IMR-90 (cell line): ENCODE measurements at regions of chr1 and their contacts with region 1.

Region 1: DNA sequence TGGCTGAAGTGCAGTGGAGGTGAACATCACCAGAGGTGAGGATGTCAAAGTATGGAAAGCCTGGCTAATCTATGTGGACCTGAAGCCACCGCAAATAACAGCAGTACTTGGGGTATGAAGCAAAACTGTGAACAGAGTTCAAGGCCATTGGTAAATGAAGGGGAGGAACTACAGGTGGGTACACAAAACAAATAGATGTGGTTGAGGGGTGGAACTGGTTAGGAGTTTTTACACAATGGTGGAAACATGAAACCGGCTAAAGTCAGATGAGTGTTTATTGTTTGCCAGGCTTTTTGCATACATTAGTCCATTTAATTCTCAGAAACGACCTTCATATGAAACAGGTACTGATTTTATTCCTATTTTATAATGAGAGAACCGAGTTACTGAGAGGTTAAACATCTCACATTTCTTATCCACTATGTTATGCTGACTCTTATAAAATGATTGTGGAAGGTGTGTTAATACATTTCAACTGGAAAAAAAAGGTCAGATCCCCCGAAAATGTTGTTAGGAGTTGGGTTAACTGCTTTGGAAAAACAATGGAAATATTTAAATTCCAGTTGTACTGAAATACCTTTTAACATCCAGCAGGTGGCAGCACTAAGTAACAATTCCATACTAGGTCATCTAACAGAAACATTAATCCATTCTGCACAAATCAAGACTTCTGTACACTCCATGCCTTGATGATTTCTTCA is 44.3 kb upstream of the GTF2B start:
- DNase-seq: peak; percentile 52
- ATAC-seq: peak; percentile 81
- H3K4me3 ChIP-seq: no peak overlapping the region
- H3K27ac ChIP-seq: no peak overlapping the region
- H3K4me1 ChIP-seq: no peaks in the 10 kb centered on the region
- H3K27me3 ChIP-seq: no peaks in the 10 kb centered on the region
- CTCF ChIP-seq: peak; percentile 60
- POLR2A ChIP-seq: no peak
- RAD21 ChIP-seq: peak; percentile 49

Region 2: DNA sequence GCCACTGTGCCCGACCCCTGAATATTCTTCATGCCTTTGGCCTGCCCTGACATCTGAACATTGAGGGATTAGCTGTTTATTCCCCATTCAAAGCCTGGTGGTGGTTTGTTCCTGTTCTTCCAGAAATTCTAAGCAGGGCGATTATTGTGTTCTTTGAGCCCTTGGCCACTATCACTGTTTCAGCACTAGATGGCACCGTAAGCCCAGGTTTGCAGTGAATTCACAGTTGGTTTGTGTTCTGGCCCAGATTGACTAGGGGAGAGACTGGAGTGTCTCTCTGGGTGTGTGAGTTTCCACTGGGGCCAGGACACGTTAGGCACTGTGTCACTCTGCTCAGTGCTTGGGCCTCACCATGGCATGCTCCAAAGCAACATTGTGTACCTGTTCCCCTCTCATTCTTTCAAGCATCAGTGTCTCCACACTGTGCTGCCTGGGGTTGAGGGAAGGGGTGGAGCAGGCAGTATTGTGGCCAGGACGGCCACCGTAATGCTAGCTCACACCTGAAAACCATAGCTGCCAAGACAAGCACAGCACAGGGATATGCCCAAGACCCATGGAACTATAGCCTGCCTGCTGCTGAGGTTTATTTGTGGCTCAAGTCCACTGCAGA is 198.9 kb before region 1 on chr1:
- CTCF ChIA-PET with region 1: no interaction called
- POLR2A ChIA-PET with region 1: no interaction called
- dilution Hi-C with region 1: no loop called
- in situ Hi-C with region 1: no loop called
- intact Hi-C with region 1: loop called (anchors 1 kb)
- DNase-seq: peak; percentile 55
- ATAC-seq: peak; percentile 65
- H3K4me3 ChIP-seq: no peak overlapping the region
- H3K27ac ChIP-seq: no peak overlapping the region
- H3K4me1 ChIP-seq: peaks cover 3% of the 10 kb centered on the region; the same call in 1 of the 2 replicates
- H3K27me3 ChIP-seq: no peaks in the 10 kb centered on the region
- CTCF ChIP-seq: peak; percentile 74
- POLR2A ChIP-seq: no peak
- RAD21 ChIP-seq: peak; percentile 88